ENCODE measurements at regions of chr11 and their contacts with region 1.

Region 1: DNA sequence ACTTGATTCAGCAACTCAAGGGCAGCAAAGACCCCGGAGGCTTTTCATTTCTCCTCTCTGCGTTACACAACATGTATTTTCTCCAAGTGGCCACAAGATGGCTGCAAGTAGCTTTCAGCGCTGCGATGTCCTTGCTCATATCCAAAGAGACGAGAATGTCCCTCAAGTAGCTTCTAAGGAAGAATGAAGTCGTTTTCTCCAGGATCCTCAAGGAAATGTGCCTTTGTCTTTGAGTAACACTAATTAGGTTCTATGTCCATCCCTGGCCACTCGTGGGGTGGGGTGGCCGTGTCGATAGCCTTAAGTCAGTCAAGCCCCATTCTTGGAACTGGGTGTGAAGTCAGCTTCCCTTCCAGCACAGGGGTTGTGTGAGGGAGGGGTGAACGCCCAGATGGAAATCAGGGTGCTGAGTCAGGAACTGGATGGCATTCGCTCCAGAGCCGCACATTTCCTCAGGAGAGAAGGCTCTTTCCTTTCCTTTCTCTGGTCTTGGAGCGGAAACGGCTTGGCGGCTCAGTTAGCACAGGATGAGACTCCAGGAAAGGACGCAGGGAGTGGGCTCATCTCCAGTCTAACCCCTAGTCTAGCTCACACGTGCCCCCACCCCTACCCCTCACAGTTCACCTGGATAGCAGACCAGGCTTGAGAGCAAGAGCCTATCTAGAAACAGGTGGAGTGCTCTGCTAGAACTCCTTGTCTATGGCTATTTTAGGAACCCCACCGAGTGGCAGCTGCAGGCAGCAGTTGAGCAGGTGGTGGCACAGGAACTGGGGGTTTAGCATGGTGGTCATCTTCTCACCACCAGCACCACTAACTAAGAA is 44.3 kb downstream of the NNMT start:
- DNase-seq: peak in 7 of 10 donors; percentile 11 to 87 (median 27)

Region 2: GRCh38 chr11:113862435-113862834 is 478.1 kb before region 1 on chr11:
- intact Hi-C with region 1: no loop called
- DNase-seq: no peak

Region 3: DNA sequence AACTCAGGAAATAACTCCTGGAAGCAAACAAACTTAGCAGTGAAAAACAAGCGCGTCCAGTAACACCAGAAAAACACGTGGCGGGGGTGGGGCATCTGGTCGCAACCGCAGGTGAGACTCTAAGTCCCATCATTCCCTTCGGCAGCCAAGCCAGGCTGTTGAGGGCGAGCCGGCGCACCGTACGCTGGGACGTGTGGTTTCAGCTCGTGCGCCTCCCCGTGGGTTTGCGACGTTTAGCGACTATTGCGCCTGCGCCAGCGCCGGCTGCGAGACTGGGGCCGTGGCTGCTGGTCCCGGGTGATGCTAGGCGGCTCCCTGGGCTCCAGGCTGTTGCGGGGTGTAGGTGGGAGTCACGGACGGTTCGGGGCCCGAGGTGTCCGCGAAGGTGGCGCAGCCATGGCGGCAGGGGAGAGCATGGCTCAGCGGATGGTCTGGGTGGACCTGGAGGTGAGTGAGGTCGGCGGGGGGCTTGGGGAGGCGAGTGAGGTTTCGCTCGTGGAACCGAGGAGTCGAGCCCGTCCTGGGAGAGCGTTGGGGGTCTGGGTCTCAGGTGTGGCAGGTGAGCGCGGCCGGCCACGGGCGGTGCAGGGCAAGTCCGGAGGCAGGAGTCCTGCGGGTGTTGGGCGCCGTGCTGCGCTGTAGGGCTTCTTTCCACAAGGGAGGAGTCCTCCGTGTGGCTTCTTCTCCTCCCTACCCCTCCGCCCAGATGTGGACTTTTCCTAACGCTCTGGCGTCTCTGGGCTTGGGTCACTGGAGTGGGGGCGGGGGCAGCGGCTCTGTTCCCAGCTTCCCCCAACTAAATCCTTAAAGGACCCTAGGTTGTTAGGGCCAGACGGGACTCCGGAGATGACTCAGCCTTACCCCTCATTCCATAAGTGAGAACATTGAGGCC is 99.0 kb after region 1 on chr11 and contains the start of gene REXO2:
- intact Hi-C with region 1: loop called (anchors 5 kb)
- DNase-seq: peak; percentile 92 to 99 (median 95)

Region 4: DNA sequence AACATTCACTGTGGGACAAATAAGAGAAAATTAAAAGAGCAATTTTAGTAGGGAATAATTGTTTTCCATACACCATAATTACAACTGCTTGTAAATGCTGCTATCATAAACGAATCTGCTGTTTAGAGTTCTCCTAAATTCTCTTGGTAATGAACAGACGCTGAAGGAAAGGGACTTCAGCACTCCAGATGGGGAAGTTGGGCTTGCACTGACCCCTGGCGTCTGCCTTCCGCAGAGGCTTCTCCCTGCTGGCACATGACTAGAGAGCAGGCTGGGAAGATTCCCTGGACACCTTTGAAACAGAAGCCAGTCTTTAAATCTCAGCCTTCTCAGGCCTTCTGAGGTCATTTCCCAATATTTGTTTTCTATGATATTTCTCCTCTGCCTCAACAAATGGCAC is 421.9 kb after region 1 on chr11:
- intact Hi-C with region 1: loop called (anchors 2 kb)
- DNase-seq: peak; percentile 35 to 94 (median 64)